Posterior vena cava (tissue), 2 donors: ENCODE measurements at regions of chr3 and their contacts with region 1.

Region 1: DNA sequence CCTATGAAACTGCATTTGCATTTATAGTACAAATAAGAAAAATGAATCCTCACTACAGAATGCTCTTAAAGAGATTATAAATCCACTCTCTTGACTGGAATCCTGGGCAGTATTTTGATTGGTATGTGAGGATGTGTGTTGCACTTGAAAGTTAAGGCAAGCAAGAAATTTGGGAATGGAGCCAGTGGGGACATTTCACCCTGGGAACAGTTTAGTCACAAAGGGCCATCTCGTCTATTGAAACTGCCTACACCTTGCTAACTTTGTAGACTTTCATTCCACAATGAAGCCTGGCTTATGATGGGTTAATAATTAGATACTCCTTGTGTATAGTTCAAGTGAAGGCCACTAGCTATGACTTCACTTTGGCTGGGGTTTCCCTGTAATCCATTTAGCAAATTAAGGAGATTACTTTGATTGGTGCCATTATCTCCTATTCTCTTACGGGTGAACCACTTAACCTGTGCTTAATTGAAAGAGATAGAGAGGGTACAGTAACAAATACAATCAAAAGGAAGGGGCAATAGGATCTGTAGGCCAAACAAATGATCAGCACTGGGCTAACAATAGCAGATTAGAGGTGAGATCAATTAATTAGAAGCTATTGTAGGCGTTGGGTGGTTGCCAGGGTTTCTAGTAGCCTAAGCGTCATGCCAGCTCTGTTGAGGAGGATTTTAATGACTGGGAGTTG is 146.9 kb upstream of the RARB start:
- DNase-seq: no peak

Region 2: GRCh38 chr3:25304916-25305315 is 23.7 kb after region 1 on chr3:
- intact Hi-C with region 1: loop called in 1 of 2 experiments (anchors 1 kb)
- DNase-seq: no peak